Activated CD8-positive, alpha-beta memory T cell treated with anti-CD3 and anti-CD28 coated beads, Interleukin-2, amount 10 ng/mL, durations not matched to agents 7 days and 5 days (primary cell): ENCODE measurements at regions of chr19 and their contacts with region 1.

Region 1: DNA sequence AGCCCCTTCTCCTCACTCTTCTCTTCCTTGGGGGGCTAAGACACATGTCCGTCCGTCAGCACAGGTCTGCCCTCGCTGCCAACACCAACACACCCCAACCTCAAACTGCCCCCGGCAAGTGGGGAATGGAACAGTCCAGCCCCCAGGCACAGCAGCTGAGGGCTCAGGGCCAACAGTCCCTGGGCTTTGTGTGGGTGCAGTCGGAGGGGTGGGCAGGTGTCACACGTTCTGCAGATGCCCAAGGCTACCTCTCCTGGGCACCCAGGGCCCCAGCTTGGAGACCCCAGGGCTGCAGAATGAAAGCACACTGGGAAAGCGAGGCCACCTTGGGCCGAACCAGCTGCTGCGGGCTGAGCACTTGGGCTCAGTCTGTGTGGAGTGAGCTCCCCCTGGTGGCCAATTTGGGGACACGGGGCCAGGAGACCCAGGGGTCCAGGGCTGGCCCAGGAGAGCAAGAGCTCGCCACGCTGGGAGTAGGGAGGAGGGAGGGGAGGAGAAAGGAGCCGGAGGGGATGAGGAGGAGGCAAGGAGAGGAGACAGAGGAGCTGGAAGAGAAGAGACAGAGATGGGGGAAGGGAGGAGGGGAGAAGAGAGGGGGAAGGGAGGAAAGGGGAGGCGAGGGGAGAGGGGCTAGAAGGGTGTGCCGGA is 14.0 kb upstream of the ATP8B3 start:
- DNase-seq: peak; percentile 81
- ATAC-seq: peak; percentile 87
- H3K4me3 Mint-ChIP-seq: no peak overlapping the region
- H3K27ac Mint-ChIP-seq: no peak overlapping the region
- H3K4me1 Mint-ChIP-seq: no peaks in the 10 kb centered on the region
- H3K27me3 Mint-ChIP-seq: no peaks in the 10 kb centered on the region

Region 2: GRCh38 chr19:1690699-1691307 is 135.2 kb before region 1 on chr19:
- CTCF ChIA-PET with region 1: no interaction called
- DNase-seq: peak; percentile 71
- ATAC-seq: peak; percentile 64
- H3K4me3 Mint-ChIP-seq: no peak overlapping the region
- H3K27ac Mint-ChIP-seq: no peak overlapping the region
- H3K4me1 Mint-ChIP-seq: peaks cover 3% of the 10 kb centered on the region
- H3K27me3 Mint-ChIP-seq: peaks cover 8% of the 10 kb centered on the region

Region 3: GRCh38 chr19:1787116-1787515 is 38.9 kb before region 1 on chr19:
- CTCF ChIA-PET with region 1: interaction called, 32 read pairs
- DNase-seq: no peak
- ATAC-seq: no peak
- H3K4me3 Mint-ChIP-seq: no peak overlapping the region
- H3K27ac Mint-ChIP-seq: no peak overlapping the region
- H3K4me1 Mint-ChIP-seq: no peaks in the 10 kb centered on the region
- H3K27me3 Mint-ChIP-seq: no peaks in the 10 kb centered on the region

Region 4: DNA sequence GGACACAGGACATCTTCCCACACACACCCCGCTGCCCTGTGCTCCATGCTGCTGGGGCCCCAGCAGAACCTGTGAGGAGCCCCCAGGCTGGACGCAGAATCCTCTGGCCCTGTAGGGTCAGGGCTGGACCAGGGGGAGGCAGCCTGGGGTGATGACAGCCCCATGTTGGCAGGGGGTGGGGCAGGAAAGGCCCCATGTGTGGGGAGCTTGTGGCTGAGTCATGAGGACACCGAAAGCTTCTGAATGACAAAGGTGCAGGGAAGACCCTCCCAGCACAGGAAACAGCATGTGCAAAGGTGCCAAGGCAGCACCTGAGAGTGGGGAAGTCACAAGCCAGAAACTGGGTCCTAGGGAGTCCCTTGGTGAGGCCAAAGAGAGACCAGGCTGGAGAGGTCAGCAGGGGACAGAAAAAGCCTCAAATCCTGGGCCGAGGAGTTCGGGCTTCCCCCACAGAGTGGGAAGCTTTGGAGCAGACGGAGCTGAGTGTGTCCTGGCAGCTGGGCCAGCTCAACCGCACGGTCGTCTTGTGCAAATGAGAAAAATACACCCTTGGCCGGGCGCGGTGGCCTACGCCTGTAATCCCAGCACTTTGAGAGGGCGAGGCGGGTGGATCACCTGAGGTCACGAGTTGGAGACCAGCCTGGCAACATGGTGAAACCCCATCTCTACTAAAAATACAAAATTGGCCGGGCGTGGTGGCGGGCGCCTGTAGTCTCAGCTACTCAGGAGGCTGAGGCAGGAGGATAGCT is 31.4 kb before region 1 on chr19:
- CTCF ChIA-PET with region 1: interaction called, 32 read pairs
- DNase-seq: no peak
- ATAC-seq: no peak
- H3K4me3 Mint-ChIP-seq: no peak overlapping the region
- H3K27ac Mint-ChIP-seq: no peak overlapping the region
- H3K4me1 Mint-ChIP-seq: peaks cover 9% of the 10 kb centered on the region
- H3K27me3 Mint-ChIP-seq: no peaks in the 10 kb centered on the region

Region 5: DNA sequence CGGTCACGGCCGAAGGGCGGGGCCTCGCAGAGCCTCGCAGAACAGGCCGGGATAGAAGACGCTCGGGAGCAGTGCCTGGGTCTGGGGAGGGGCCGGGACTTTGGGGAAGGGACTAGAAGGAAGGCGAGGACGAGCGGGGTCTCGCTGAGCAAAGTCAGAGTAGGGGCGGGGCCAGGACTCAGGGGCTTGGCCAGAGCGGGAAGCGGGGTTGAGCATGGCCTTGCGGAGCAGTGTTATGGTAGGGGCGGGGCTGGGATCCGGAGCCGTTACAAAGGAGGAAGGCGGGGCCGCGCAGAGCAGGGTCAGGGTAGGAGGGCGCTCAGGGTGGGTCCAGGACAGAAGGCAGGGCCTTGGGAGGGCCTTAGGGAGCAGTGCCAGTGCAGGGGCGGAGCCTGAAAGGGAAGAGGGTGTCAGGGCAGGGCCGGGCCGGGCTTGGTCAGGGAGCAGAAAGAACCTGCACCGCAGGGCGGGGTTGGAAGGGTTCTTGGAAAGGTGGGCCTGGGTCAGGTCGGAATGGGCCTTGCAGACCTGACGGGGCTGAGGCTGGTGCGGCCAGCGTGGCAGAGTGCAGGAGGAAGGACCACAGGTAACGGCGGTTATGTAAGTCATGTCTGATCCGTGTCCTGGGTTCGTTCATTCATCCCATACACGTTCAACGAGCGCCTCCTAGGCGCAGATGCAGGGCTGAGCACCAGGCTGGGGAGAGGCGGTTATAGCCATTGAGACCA is 13.4 kb before region 1 on chr19:
- CTCF ChIA-PET with region 1: interaction called, 19 read pairs
- DNase-seq: peak; percentile 99
- ATAC-seq: peak; percentile 91
- H3K4me3 Mint-ChIP-seq: peak overlapping the region; percentile 81
- H3K27ac Mint-ChIP-seq: peak overlapping the region; percentile 99
- H3K4me1 Mint-ChIP-seq: peaks cover 14% of the 10 kb centered on the region
- H3K27me3 Mint-ChIP-seq: no peaks in the 10 kb centered on the region

Region 6: DNA sequence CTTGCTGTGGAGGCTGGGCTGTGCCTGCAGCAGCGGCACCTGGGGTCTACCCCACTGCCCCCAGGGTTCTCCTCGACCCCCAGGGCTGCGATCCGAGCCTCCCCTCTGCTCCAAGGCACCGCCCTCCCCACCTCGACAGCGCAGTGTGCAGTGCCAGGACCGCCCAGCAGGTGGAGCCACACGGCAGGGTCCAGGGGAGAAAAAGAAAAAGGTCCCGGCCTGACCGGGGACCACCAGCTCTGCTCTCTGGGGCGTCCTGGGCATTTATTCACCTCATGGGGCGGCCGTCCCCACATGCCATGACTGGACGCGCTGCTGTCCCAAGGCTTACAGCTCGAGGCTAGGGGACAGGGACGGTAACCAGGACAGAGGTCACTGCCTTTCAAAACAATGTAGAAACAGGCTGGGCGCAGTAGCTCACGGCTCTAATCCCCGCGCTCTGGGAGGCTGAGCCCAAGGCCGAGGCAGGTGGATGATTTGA is 11.6 kb after region 1 on chr19:
- CTCF ChIA-PET with region 1: interaction called, 42 read pairs
- DNase-seq: peak; percentile 71
- ATAC-seq: peak; percentile 64
- H3K4me3 Mint-ChIP-seq: no peak overlapping the region
- H3K27ac Mint-ChIP-seq: peak overlapping the region; percentile 32
- H3K4me1 Mint-ChIP-seq: peaks cover 2% of the 10 kb centered on the region
- H3K27me3 Mint-ChIP-seq: no peaks in the 10 kb centered on the region

Region 7: DNA sequence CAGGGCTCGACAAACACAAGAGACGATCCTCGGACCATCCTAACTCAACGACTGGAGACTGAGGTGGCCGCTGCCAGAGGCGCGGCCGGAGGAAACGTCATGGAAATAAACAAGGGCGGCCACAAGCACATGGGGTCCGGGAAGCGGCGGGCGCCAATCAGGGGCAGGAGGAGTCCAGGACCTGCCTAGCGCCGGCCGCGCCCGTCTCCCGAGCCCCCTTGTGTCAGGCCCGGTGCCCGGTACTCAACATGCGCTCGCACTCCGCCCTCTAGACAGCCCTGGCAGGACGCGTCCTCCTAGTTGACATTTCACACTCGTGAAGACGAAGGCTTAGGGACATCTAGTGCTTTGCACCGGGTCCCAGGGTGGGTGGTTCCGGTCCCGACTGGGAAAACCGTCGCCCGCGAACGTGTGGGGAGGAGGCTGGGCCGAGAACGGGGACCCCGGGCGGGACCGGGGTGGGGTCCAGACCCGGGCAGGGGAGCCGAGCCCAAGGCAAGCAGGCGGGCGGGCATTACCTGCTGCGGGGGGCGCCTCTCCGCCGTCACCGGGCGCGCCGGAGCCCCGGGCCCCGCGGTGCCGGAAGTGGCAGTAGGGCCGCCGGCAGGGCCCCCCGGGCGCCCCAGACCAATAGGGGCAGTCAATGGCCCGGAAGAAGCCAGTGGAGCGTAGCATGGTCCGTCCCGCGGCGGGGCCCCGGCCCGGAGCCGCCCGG is 21.8 kb after region 1 on chr19:
- CTCF ChIA-PET with region 1: interaction called, 14 read pairs
- DNase-seq: peak; percentile 66
- ATAC-seq: peak; percentile 51
- H3K4me3 Mint-ChIP-seq: peak overlapping the region; percentile 81
- H3K27ac Mint-ChIP-seq: peak overlapping the region; percentile 94
- H3K4me1 Mint-ChIP-seq: peaks cover 44% of the 10 kb centered on the region
- H3K27me3 Mint-ChIP-seq: no peaks in the 10 kb centered on the region

Region 8: GRCh38 chr19:1896508-1896907 is 70.5 kb after region 1 on chr19:
- CTCF ChIA-PET with region 1: no interaction called
- DNase-seq: no peak
- ATAC-seq: no peak
- H3K4me3 Mint-ChIP-seq: peak overlapping the region; percentile 82
- H3K27ac Mint-ChIP-seq: peak overlapping the region; percentile 98
- H3K4me1 Mint-ChIP-seq: peaks cover 43% of the 10 kb centered on the region
- H3K27me3 Mint-ChIP-seq: no peaks in the 10 kb centered on the region

Region 9: DNA sequence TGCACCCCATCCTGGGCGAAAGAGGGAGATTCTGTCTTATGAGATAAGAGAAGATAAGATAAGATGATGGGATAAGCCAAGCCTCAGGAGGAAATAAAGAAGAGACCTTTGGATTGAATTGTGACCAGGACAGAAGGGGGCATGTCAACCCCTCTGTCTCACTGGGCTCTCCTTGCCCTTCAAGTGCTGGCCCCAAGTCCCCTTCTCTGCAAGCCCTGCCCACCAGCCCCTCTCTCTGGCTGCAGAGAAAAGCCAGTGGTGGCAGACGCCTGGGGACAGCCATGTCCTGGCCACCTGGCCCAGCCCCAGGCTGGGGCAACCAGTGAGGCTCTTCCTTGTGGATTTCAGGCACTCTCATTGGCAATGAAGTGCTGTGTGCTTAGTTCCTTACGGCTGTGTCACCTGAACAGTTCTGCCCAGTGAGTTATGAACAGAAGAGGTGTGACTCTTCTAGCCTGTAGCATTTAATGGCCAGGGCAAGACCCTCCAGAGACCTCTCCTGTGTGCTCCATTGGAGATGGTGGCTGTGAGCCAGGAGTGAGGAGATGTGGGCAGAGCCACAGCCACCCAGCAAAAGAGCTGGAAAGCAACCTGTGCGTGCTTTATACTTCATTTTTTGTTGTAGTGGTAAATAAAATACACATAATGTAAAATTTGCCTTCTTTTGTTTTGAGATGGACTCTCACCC is 195.6 kb after region 1 on chr19:
- CTCF ChIA-PET with region 1: no interaction called
- DNase-seq: no peak
- ATAC-seq: no peak
- H3K4me3 Mint-ChIP-seq: no peak overlapping the region
- H3K27ac Mint-ChIP-seq: no peak overlapping the region
- H3K4me1 Mint-ChIP-seq: peaks cover 4% of the 10 kb centered on the region
- H3K27me3 Mint-ChIP-seq: no peaks in the 10 kb centered on the region